Right ventricle myocardium superior (tissue), 1 donor: ENCODE measurements at regions of chr1 and their contacts with region 1.

Region 1: DNA sequence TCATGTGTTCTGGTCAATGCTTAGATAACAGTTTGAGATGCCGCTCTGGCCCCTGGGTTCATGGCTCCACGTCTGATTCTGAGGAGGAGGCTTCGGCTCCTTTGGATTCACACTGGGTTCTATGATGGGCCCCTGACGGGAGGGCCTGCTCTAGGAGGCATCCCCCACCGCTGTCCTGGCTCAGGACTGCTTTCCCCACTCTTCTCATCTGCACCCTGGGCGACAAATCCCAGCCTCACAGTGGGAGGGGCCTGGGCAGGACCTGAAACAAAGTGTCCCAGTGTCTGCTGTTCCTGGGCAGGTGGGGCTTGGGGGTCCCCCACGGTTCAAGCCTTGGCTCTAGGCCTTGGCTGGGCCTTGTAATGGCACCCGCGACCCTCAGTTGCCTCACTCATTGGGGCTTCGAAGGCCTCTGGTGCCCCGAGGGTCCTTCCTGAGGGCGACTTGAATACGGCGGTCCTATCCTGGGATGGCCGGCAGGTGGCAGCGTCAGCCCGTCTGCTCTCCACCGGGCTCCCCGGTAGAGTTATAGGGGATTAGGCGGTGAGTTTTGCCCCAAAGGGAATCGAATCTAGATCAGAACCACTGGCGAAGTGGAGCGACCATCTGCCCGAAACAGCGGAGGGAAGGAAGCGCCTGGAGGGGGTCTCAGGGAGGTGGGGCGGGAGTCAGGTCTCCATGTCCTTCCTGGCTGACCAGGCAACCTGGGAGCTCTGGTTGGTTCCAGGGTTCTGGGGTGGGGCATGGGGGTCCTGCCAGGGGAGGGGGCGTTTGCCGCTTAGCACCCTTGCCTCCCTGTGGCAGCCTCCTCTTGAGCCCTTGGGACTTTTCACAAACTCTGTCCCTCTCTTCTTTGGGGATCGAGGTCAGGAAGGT is 2.0 kb upstream of the PEX10 start:
- DNase-seq: peak; percentile 86
- ATAC-seq: peak; percentile 28

Region 2: DNA sequence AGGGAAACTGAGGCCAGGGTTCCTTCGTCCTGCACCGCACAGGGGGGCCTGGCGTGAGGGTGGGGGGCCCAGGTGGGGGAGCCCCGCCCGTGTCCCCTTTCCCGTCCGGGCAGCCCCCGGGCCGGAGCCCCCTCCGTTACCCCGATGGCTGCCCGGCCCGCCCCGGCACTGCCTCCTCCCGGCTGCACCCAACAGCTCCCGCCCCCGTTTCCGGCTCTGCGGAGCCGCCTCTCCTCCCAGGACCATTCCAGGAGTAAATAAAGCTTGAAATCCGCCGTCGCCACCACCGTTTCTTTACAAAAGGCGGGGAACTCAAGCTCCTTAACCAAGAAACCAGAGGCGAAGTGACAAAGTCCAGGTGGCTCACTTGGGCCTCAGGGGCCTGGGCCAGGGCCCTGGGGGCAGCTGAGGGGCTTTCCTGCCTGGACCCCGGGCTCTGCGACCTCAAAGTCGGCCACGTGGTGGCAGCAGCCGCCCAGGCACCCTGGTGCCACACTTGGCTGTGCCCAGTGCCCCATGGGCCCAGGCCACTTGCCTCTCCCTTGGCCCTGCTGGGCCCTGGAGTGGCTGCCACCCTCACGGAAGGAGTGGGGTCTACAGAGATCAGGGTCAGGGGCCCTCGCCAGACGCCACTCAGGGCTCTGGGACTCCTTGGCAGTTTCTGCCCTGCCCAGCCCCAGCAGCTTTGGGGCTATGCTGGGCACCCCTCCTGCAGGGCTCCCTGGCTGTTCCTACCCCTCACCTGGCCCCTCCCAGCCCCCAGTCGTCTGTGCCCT is 219.2 kb before region 1 on chr1:
- intact Hi-C with region 1: no loop called
- DNase-seq: peak; percentile 94
- ATAC-seq: peak; percentile 83

Region 3: GRCh38 chr1:2545759-2546514 is 131.6 kb after region 1 on chr1:
- intact Hi-C with region 1: loop called (anchors 2 kb)
- DNase-seq: peak; percentile 93
- ATAC-seq: peak; percentile 68

Region 4: DNA sequence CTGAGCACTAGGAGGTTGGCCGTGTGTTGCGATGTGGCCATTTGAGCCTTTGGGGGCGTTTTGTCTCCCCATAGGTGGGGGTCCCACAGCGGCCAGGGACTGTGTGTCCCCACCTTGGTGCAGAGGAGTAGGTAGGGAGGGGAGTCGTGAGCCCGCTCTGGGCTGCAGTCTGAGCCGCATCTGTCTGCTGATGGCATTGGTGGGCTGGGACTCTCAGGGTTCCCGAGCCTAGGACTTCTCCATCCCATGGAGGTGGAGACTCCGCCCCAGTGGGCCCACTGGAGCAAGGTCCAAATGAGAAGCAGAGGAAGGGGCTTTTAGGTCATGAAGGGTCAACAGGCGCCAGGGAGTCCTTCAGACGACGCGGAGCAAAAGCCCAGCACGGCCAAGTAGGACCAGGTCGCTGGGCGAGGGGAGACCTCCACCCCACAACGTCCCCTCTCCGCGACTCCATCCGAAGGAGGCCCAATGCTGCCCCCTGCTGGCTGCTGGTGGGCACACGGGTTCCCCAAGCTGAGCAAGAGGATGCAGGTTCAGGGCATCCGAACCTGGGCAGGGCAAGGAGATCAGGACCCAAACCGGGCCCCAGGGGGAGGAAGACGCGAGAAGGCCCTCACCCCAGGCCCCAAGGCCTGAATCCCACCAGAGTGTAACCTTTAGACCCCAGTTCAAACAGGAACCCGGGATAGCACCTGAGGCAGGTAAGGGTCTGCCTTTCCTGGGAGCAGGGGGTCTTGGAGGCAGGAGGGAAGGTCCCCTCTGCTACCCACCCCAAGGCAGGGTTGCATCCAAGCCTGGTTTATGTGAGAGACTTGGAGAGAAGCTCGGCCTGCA is 372.2 kb after region 1 on chr1:
- intact Hi-C with region 1: loop called (anchors 5 kb)
- DNase-seq: peak; percentile 67
- ATAC-seq: no peak